ENCODE measurements at regions of chr19 and their contacts with region 1.

Region 1: GRCh38 chr19:44657211-44657921 is 13.7 kb downstream of the PVR start:
- DNase-seq: no peak
- H3K4me3 ChIP-seq: no peak overlapping the region
- H3K27ac ChIP-seq: no peak overlapping the region
- H3K4me1 ChIP-seq: peaks cover 0 to 15% (median 9%) of the 10 kb centered on the region in 4 donors
- H3K27me3 ChIP-seq: no peaks in the 10 kb centered on the region
- CTCF ChIP-seq: peak in 2 of 3 experiments; percentile 83 to 89
- EP300 ChIP-seq: no peak
- POLR2A ChIP-seq: no peak

Region 2: GRCh38 chr19:44570984-44571684 is 86.2 kb before region 1 on chr19:
- intact Hi-C with region 1: loop called (anchors 2 kb)
- DNase-seq: no peak
- H3K4me3 ChIP-seq: no peak overlapping the region
- H3K27ac ChIP-seq: no peak overlapping the region
- H3K4me1 ChIP-seq: no peaks in the 10 kb centered on the region
- H3K27me3 ChIP-seq: peaks cover 0 to 39% (median 2%) of the 10 kb centered on the region in 4 donors
- CTCF ChIP-seq: peak; percentile 48 to 76 (median 64)
- EP300 ChIP-seq: no peak
- POLR2A ChIP-seq: no peak

Region 3: GRCh38 chr19:44587963-44588770 is 69.2 kb before region 1 on chr19:
- intact Hi-C with region 1: loop called (anchors 5 kb)
- DNase-seq: no peak
- H3K4me3 ChIP-seq: no peak overlapping the region
- H3K27ac ChIP-seq: no peak overlapping the region
- H3K4me1 ChIP-seq: peaks cover 0 to 7% (median 3%) of the 10 kb centered on the region in 4 donors
- H3K27me3 ChIP-seq: peaks cover 0 to 15% (median 0%) of the 10 kb centered on the region in 4 donors
- CTCF ChIP-seq: peak in 1 of 3 experiments; percentile 17
- EP300 ChIP-seq: no peak
- POLR2A ChIP-seq: no peak